ENCODE measurements at regions of chr11 and their contacts with region 1.

Region 1: DNA sequence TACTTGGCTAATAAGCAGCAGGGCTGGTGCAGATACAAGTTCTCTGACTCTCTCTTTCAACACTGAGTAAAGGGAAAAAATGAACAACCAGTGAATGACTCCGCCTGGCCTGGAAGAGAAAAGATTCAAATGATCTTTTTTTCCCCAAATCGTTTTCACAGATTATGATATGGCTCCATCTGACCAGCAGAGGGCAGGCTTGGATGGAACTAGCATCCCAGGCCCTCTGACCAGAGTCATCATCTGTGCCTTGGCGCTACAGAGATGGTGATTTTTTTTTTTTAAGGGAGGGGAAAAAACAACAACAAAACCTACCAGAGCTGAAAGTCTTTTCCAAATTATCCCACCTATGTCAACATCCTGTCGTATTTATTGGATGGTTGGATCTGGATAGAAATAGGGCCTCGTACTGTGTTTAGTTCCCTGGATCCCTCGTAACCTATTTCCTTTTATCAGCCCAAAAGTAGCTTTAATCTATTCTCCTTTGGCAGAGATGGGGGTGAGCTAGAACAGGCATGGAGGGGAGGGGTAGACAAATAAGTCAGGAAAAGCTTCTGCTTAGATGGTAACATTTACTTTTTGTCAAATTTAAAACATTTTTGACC is 69.7 kb downstream of the PRSS23 start:
- DNase-seq: no peak
- H3K4me3 ChIP-seq: no peak overlapping the region
- H3K27ac ChIP-seq: no peak overlapping the region
- H3K4me1 ChIP-seq: peaks cover 0 to 5% (median 0%) of the 10 kb centered on the region in 6 donors
- H3K27me3 ChIP-seq: no peaks in the 10 kb centered on the region
- CTCF ChIP-seq: peak; percentile 33 to 73 (median 59)
- POLR2A ChIP-seq: no peak

Region 2: GRCh38 chr11:86919557-86920210 is 49.6 kb after region 1 on chr11:
- intact Hi-C with region 1: loop called (anchors 5 kb)
- DNase-seq: no peak
- H3K4me3 ChIP-seq: no peak overlapping the region
- H3K27ac ChIP-seq: peak overlapping the region in 1 of 8 donors; percentile 46
- H3K4me1 ChIP-seq: peaks cover 0 to 16% (median 7%) of the 10 kb centered on the region in 6 donors
- H3K27me3 ChIP-seq: no peaks in the 10 kb centered on the region
- CTCF ChIP-seq: peak in 7 of 11 experiments; percentile 34 to 58 (median 49)
- POLR2A ChIP-seq: no peak

Region 3: GRCh38 chr11:87281496-87281895 is 411.4 kb after region 1 on chr11:
- intact Hi-C with region 1: loop called (anchors 10 kb)
- DNase-seq: no peak
- H3K4me3 ChIP-seq: no peak overlapping the region
- H3K27ac ChIP-seq: no peak overlapping the region
- H3K4me1 ChIP-seq: no peaks in the 10 kb centered on the region
- H3K27me3 ChIP-seq: no peaks in the 10 kb centered on the region
- CTCF ChIP-seq: peak in 5 of 11 experiments; percentile 10 to 32 (median 22)
- POLR2A ChIP-seq: no peak

Measured in spleen (tissue), 13 donors.